Activated CD4-positive, alpha-beta memory T cell treated with anti-CD3 and anti-CD28 coated beads for 36 hours (primary cell): ENCODE measurements at regions of chr5 and their contacts with region 1.

Region 1: GRCh38 chr5:139422307-139422893 is 16.9 kb downstream of the DNAJC18 start:
- DNase-seq: peak; percentile 50
- H3K4me3 Mint-ChIP-seq: no peak overlapping the region
- H3K27ac Mint-ChIP-seq: peak overlapping the region; percentile 83
- H3K4me1 Mint-ChIP-seq: peaks cover 10% of the 10 kb centered on the region
- H3K27me3 Mint-ChIP-seq: no peaks in the 10 kb centered on the region

Region 2: DNA sequence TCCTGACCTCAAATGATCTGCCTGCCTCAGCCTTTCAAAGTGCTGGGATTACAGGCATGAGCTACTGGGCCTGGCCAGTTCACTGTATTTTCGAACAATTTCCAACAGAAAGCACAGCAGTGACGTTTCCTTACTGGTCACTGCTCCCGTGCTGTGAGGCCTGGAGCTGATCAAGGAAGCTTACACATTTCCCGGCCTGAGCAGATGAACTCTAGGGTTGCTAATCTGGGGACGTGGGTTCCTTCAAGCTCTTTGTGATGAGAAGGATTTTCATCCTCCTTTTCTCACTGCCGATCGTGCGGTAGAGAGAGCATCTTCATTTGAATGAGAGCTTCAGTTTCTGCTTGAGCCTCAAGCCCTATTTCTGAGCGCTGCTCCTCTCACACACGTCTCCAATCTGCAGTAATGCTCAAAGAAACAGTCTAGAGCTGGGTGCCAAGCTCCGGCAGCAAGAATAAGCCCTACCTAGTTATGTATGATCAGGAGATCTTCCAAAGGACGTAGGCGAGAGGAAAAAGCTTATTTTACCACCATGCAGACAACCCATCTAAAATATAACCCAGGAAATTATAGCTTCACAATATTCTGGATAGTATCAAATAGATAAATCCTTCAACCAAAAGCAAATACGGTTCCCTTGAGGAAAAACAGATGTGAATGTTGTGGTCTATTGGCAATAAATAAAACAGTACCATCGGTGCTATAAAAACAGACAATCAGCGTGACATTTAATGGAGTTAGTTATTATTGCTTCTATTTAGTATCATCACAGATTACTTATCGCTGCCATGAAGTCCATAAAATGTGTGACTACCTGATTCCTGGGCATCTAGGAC is 11.2 kb before region 1 on chr5:
- CTCF ChIA-PET with region 1: interaction called, 16 read pairs
- POLR2A ChIA-PET with region 1: no interaction called
- intact Hi-C with region 1: no loop called
- DNase-seq: no peak
- H3K4me3 Mint-ChIP-seq: no peak overlapping the region
- H3K27ac Mint-ChIP-seq: no peak overlapping the region
- H3K4me1 Mint-ChIP-seq: peaks cover 43% of the 10 kb centered on the region
- H3K27me3 Mint-ChIP-seq: no peaks in the 10 kb centered on the region

Region 3: DNA sequence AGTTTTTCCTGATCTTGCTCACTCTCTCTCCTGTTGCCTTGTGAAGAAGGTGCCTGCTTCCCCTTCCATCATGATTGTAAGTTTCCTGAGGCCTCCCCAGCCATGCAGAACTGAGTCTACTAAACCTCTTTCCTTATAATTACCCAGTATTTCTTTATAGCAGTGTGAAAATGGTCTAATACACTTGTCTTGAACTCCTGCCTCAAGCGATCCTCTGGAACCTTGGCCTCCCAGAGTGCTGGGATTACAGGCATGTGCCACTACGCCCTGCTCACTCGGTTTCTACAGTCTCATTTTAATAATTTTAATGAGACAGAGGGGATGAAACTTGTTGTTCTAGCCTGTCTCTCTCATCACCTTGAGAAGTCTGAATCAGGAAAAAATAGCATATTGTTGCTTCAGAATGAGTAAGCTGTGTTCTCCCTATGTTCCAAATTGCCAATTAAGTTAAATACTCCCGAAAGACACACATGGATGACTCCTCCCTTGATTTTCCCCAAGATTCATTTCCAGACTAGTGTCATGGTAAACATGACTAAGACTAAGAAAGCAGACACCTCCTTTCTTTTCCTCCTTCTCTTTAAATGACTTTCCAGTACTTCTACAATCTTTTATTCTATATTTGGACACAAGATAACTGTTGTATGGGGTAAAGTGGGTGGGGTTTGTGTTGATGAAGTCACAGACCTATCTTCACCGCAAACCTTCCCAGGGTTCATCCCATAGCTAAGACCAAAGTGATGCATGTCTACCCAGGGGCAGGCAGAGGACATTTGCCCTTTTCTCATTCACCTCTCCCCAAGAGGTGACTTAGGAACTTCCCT is 24.8 kb after region 1 on chr5:
- CTCF ChIA-PET with region 1: interaction called, 7 read pairs
- POLR2A ChIA-PET with region 1: interaction called, 9 read pairs
- intact Hi-C with region 1: loop called (anchors 1 kb)
- DNase-seq: peak; percentile 72
- H3K4me3 Mint-ChIP-seq: peak overlapping the region; percentile 7
- H3K27ac Mint-ChIP-seq: peak overlapping the region; percentile 93
- H3K4me1 Mint-ChIP-seq: peaks cover 67% of the 10 kb centered on the region
- H3K27me3 Mint-ChIP-seq: no peaks in the 10 kb centered on the region

Region 4: GRCh38 chr5:139468421-139468931 is 46.1 kb after region 1 on chr5:
- CTCF ChIA-PET with region 1: interaction called, 10 read pairs
- POLR2A ChIA-PET with region 1: interaction called, 9 read pairs
- intact Hi-C with region 1: loop called (anchors 2 kb)
- DNase-seq: peak; percentile 69
- H3K4me3 Mint-ChIP-seq: peak overlapping the region; percentile 41
- H3K27ac Mint-ChIP-seq: peak overlapping the region; percentile 83
- H3K4me1 Mint-ChIP-seq: peaks cover 51% of the 10 kb centered on the region
- H3K27me3 Mint-ChIP-seq: no peaks in the 10 kb centered on the region

Region 5: DNA sequence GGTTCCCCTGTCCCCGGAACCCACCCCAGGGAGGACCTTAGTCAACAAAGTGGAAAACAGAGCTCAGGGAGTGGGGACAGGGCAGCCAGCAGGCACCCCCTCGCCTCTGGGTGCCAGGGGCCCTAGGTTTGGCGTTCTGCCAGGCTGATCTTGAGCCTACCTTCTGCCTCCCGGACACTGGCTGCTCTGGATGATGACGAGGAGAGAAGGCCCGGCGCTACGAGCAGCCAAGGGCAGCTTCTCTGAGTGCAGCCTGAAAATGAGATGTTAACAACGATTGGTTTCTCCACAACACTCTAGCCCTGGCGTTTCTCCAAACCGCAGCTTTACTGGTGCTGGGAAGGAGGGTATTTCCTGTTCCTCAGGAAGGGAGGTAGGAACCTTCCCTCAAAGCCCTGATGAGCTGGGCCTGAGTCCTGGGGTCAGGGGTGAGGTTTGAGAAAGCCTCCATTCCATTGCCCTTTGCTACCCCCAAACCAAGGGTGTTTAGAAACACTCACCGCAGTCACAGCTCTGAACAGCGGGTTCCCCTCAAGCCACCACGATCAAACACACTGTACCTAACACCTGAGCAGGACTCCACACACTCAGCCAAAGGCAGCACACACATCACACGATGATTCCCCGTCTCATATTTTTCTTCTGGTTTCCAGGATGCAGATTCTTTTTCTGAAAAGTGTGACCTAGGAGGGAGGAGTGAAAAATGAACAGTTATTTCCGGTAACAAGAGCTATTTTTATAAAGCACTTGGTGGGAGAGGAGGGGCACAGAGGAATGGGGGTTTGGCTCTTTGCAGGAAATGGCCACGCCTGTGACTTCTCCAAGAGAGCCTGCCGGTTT is 59.9 kb after region 1 on chr5 and contains the start of gene STING1:
- CTCF ChIA-PET with region 1: interaction called, 40 read pairs
- POLR2A ChIA-PET with region 1: interaction called, 50 read pairs
- intact Hi-C with region 1: loop called (anchors 1 kb)
- DNase-seq: peak; percentile 83
- H3K4me3 Mint-ChIP-seq: peak within 1 kb of the TSS; percentile 94
- H3K27ac Mint-ChIP-seq: peak within 1 kb of the TSS; percentile 99
- H3K4me1 Mint-ChIP-seq: peaks cover 38% of the 10 kb centered on the region
- H3K27me3 Mint-ChIP-seq: no peaks in the 10 kb centered on the region
- total RNA-seq, gene STING1: 339 to 344 TPM

Region 6: DNA sequence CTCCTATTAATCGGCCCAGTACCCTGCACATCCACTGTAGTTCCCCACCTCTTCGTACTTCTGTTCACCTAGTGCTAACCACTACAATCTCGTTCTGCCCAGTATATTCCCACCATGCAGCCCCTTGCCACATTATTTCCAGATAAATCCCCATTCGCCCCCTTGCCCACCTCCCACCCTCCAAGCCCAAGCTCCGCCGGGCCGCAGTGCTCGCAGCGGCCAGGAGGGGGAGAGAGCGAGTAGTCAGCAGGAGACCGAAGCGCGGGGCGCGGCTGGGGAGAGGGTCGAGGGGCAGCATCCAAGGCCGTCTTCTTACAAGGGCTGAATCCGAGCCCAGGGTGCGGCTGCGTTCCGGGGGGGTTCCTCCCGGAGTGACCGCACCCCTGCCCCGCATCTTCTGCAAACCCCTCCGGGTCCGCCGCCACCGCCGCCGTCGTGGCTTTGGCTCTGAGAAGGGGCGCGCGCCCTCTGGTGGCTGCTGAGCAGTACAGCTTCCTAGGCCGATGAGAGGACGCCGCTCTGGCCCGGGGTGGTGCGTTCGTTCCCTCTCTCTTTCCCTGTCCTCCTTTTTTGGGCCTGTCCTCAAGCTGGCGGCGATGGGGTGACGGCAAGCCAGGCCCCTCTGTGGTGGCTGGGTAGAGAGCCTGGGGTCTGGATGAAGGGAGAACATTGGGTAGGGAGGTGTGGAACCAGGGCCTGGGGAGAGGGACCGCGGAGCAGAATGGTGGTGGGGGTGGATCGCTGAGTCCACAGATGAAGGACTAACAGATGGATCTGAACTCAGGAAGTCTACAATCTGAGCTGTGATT is 343.2 kb after region 1 on chr5:
- CTCF ChIA-PET with region 1: interaction called, 6 read pairs
- POLR2A ChIA-PET with region 1: no interaction called
- intact Hi-C with region 1: loop called (anchors 5 kb)
- DNase-seq: peak; percentile 86
- H3K4me3 Mint-ChIP-seq: peak overlapping the region; percentile 50
- H3K27ac Mint-ChIP-seq: no peak overlapping the region
- H3K4me1 Mint-ChIP-seq: peaks cover 15% of the 10 kb centered on the region
- H3K27me3 Mint-ChIP-seq: peaks cover 31% of the 10 kb centered on the region